Activated CD8-positive, alpha-beta T cell treated with anti-CD3 and anti-CD28 coated beads for 36 hours (primary cell): ENCODE measurements at regions of chr1 and their contacts with region 1.

Region 1: DNA sequence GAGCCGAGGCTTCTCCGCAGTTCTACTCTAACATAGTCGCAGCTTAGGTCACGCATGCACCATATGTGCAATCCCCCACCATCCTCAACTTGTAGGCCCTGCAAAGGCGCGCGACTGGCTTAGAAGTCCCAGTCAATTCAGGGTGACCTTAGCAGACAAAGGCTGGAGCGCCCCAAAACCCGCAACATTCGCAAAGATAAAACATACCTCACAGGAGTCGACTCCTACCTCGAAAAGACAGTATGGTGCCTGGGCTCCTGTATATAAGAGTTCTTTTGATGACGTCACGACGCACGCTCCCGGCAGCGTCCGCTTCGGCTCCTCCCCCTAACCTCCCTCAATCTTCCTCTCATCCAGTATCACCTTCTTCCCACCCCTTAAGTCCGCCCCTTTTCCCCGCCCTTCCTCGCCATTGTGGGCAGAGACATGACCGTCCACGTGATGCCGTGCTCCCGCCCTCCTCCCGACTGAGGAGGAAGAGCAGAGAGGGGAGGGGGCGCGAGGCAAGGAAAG is at the start of gene GAS5:
- DNase-seq: peak; percentile 100
- ATAC-seq: peak; percentile 80
- H3K4me3 Mint-ChIP-seq: peak within 1 kb of the TSS; percentile 95
- H3K27ac Mint-ChIP-seq: peak within 1 kb of the TSS; percentile 97
- H3K4me1 Mint-ChIP-seq: peaks cover 52% of the 10 kb centered on the region
- H3K27me3 Mint-ChIP-seq: no peaks in the 10 kb centered on the region
- CTCF ChIP-seq: no peak
- total RNA-seq, gene GAS5: 1,276 to 1,298 TPM

Region 2: DNA sequence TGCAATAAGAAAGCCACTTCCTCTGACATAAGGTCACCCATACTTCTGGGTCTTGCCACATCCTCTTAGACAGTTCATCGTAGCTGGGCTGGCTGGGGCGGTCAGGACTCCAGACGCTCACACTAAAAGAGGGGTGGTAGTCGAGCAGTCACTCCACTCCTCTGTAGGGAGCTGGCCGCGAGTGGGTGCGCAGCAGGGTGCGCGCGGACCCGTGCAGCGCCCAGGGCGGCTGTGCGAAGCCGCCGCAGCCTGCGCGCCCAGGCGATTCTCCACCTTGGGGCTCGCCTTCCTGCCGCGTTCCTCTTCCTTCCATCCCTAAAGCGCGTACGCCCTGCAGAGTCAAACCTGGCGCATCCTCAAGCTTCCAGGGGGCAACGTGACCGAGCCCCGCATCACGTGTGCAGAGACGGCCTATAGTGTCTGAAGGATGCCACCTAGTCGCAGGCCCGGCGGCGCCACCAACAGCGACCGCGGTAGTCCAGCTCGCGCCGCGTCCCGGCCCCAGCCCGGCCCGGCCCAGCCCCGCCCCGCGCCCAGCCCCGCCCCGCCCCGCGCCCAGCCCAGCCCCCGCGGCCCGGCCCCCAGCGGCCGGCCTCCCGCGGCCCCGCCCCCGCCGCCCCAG is 391.0 kb before region 1 on chr1:
- CTCF ChIA-PET with region 1: no interaction called
- POLR2A ChIA-PET with region 1: interaction called, 14 read pairs
- intact Hi-C with region 1: no loop called
- DNase-seq: peak; percentile 84
- ATAC-seq: peak; percentile 84
- H3K4me3 Mint-ChIP-seq: peak overlapping the region; percentile 83
- H3K27ac Mint-ChIP-seq: peak overlapping the region; percentile 95
- H3K4me1 Mint-ChIP-seq: peaks cover 61% of the 10 kb centered on the region
- H3K27me3 Mint-ChIP-seq: no peaks in the 10 kb centered on the region
- CTCF ChIP-seq: no peak

Region 3: DNA sequence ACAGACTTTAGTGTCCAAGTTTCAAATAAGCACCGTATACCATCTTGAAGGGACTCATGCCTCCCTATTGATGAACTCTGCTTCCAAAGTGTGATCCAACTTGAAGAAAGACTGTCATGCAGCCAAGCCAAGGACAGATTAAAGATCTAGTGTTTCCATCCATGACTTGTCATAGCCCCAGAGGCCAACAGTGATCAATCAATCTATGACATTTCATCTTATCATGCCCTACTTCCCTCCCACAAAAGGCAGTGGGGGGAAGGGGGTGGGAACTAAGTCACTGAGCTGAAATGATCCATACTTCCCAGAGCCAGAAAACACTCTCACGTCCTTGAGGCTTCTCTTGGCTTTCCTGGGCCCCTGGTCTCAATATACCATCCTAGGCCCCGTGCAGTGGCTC is 45.3 kb after region 1 on chr1:
- CTCF ChIA-PET with region 1: no interaction called
- POLR2A ChIA-PET with region 1: no interaction called
- intact Hi-C with region 1: no loop called
- DNase-seq: no peak
- ATAC-seq: no peak
- H3K4me3 Mint-ChIP-seq: no peak overlapping the region
- H3K27ac Mint-ChIP-seq: no peak overlapping the region
- H3K4me1 Mint-ChIP-seq: no peaks in the 10 kb centered on the region
- H3K27me3 Mint-ChIP-seq: no peaks in the 10 kb centered on the region
- CTCF ChIP-seq: no peak

Region 4: GRCh38 chr1:173986951-173987350 is 119.1 kb after region 1 on chr1:
- CTCF ChIA-PET with region 1: no interaction called
- POLR2A ChIA-PET with region 1: no interaction called
- intact Hi-C with region 1: no loop called
- DNase-seq: no peak
- ATAC-seq: no peak
- H3K4me3 Mint-ChIP-seq: no peak overlapping the region
- H3K27ac Mint-ChIP-seq: no peak overlapping the region
- H3K4me1 Mint-ChIP-seq: no peaks in the 10 kb centered on the region
- H3K27me3 Mint-ChIP-seq: no peaks in the 10 kb centered on the region
- CTCF ChIP-seq: no peak

Region 5: DNA sequence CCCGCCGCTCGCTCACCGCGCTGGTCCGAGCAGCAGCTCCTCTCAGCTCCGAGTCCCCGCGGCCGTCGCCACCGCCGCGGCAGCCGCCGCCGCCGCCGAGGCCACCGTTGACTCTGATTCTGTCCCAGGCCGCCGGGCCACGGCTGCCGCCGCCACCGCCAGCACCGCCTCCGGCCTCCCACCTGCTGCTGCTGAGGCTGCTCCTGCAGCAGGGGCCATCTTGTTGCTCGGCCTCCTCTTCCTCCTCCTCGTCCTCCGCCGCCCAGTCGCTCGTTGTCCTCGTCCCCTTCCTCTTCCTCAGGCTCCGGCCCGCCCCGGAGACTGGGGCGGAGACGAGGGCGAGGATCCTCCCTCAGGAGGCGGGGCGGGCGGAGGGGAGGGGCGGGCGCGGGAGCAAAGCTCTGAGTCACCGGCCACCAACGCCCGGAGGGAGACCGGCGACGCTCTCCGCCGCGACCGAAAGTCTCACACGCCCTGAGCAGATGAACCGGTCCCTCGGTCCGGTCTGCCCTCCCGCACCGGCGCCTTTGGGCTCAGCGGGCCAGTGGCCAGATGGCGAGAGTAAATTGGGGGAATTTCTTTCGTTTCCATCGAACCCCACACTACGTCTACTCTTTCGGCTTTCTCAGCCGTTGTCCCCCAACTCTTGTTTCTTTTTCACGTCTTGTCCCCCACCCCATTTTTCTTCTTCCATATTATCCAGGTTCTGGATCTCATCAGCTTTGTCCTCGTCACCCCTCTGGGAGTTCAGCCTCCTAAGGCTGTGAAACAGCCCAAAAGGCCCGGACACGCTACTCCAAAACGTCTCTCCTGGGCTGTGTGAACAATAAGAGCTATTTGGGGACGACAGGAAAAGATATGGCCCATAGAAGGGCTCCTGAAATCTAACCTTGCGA is 154.5 kb after region 1 on chr1 and contains the start of gene RC3H1:
- CTCF ChIA-PET with region 1: no interaction called
- POLR2A ChIA-PET with region 1: interaction called, 10 read pairs
- intact Hi-C with region 1: no loop called
- DNase-seq: peak; percentile 90
- ATAC-seq: peak; percentile 95
- H3K4me3 Mint-ChIP-seq: peak within 1 kb of the TSS; percentile 82
- H3K27ac Mint-ChIP-seq: peak within 1 kb of the TSS; percentile 95
- H3K4me1 Mint-ChIP-seq: peaks cover 32% of the 10 kb centered on the region
- H3K27me3 Mint-ChIP-seq: no peaks in the 10 kb centered on the region
- CTCF ChIP-seq: no peak
- total RNA-seq, gene RC3H1: 24.9 to 27.2 TPM